Mammary epithelial cell (primary cell): ENCODE measurements at regions of chr11 and their contacts with region 1.

Region 1: DNA sequence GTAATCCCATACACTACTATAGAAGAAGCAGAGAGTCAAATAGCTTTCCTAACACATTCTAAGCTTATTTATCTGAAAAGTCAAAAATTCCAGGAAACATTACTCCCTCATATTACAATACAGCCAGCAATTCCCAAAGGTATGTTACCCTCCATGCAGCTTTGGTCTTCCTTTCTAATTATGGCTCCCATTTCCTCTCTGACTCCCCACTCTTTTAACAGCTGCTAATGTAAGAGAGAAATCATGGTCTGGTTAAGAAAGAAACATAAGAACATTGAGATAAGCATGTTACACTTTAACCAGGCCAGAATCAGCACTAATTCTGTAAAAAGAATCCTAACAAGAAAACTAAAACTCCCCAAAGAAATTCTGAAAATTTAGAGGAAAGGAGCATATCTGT is 6.8 kb downstream of the PPP2R1B start:
- DNase-seq: no peak
- H3K4me3 ChIP-seq: no peak overlapping the region
- H3K27ac ChIP-seq: no peak overlapping the region
- H3K4me1 ChIP-seq: peaks cover 1% of the 10 kb centered on the region
- H3K27me3 ChIP-seq: no peaks in the 10 kb centered on the region
- CTCF ChIP-seq: no peak

Region 2: GRCh38 chr11:111707039-111707690 is 52.2 kb before region 1 on chr11:
- CTCF ChIA-PET with region 1: no interaction called
- dilution Hi-C with region 1: no loop called
- in situ Hi-C with region 1: no loop called
- intact Hi-C with region 1: no loop called
- DNase-seq: no peak
- H3K4me3 ChIP-seq: no peak overlapping the region
- H3K27ac ChIP-seq: no peak overlapping the region
- H3K4me1 ChIP-seq: no peaks in the 10 kb centered on the region
- H3K27me3 ChIP-seq: no peaks in the 10 kb centered on the region
- CTCF ChIP-seq: no peak

Region 3: GRCh38 chr11:111808063-111808588 is 48.8 kb after region 1 on chr11:
- CTCF ChIA-PET with region 1: no interaction called
- dilution Hi-C with region 1: loop called (anchors 5 kb)
- in situ Hi-C with region 1: no loop called
- intact Hi-C with region 1: no loop called
- DNase-seq: no peak
- H3K4me3 ChIP-seq: no peak overlapping the region
- H3K27ac ChIP-seq: no peak overlapping the region
- H3K4me1 ChIP-seq: no peaks in the 10 kb centered on the region
- H3K27me3 ChIP-seq: no peaks in the 10 kb centered on the region
- CTCF ChIP-seq: no peak